Left cardiac atrium (tissue), 4 donors: ENCODE measurements at regions of chr14 and their contacts with region 1.

Region 1: GRCh38 chr14:57293866-57294837 is 25.4 kb downstream of the AP5M1 start:
- DNase-seq: no peak
- ATAC-seq: no peak

Region 2: DNA sequence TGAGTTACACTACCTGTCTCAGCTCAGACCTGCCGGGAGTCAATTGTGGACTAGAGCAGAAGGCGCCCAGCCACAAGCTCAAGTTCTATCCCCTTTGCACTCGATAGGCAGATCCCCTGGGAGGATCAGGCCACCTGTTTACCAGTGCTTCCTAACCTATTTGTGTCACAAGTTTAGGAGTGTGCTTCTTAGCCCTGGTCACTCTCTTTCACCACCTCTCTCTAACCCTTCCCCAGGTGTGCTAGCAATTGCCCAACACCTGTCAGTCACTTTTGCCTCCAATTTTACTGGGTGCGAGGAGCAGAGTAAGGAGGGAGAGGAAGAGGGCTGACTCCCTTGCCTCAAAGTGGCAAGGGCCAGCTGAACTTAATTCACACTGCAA is 95.5 kb after region 1 on chr14:
- intact Hi-C with region 1: loop called in 1 of 2 experiments (anchors 10 kb)
- DNase-seq: no peak
- ATAC-seq: no peak